Mammary epithelial cell (primary cell): ENCODE measurements at regions of chr6 and their contacts with region 1.

Region 1: GRCh38 chr6:31079656-31080261 is 32.6 kb downstream of the C6orf15 start:
- DNase-seq: peak; percentile 49
- H3K4me3 ChIP-seq: peak overlapping the region in 1 of 3 experiments; percentile 27
- H3K27ac ChIP-seq: no peak overlapping the region
- H3K4me1 ChIP-seq: peaks cover 8% of the 10 kb centered on the region
- H3K27me3 ChIP-seq: no peaks in the 10 kb centered on the region
- CTCF ChIP-seq: peak; percentile 72 to 83

Region 2: GRCh38 chr6:30686908-30687658 is 392.7 kb before region 1 on chr6:
- CTCF ChIA-PET with region 1: no interaction called
- dilution Hi-C with region 1: loop called (anchors 10 kb)
- in situ Hi-C with region 1: no loop called
- intact Hi-C with region 1: no loop called
- DNase-seq: peak; percentile 99
- H3K4me3 ChIP-seq: peak overlapping the region; percentile 77 to 88 (median 83)
- H3K27ac ChIP-seq: peak overlapping the region; percentile 86
- H3K4me1 ChIP-seq: peaks cover 42% of the 10 kb centered on the region
- H3K27me3 ChIP-seq: no peaks in the 10 kb centered on the region
- CTCF ChIP-seq: no peak

Region 3: GRCh38 chr6:30951907-30952469 is 127.8 kb before region 1 on chr6:
- CTCF ChIA-PET with region 1: no interaction called
- dilution Hi-C with region 1: no loop called
- in situ Hi-C with region 1: no loop called
- intact Hi-C with region 1: no loop called
- DNase-seq: no peak
- H3K4me3 ChIP-seq: no peak overlapping the region
- H3K27ac ChIP-seq: no peak overlapping the region
- H3K4me1 ChIP-seq: peaks cover 6% of the 10 kb centered on the region
- H3K27me3 ChIP-seq: peaks cover 3% of the 10 kb centered on the region
- CTCF ChIP-seq: no peak